ENCODE measurements at regions of chr16 and their contacts with region 1.

Region 1: GRCh38 chr16:23556881-23557778 is at the starts of genes EARS2 and UBFD1:
- DNase-seq: peak; percentile 96
- ATAC-seq: peak; percentile 91
- H3K4me3 ChIP-seq: peak within 1 kb of the TSS; percentile 96
- H3K27ac ChIP-seq: peak within 1 kb of the TSS; percentile 95
- H3K4me1 ChIP-seq: peaks cover 5% of the 10 kb centered on the region; the same call in 1 of the 2 replicates
- H3K27me3 ChIP-seq: no peaks in the 10 kb centered on the region
- CTCF ChIP-seq: peak; percentile 74
- total RNA-seq, gene EARS2: 23.7 and 31.6 TPM in 2 replicates
- total RNA-seq, gene UBFD1: 69.7 and 85.3 TPM in 2 replicates

Region 2: DNA sequence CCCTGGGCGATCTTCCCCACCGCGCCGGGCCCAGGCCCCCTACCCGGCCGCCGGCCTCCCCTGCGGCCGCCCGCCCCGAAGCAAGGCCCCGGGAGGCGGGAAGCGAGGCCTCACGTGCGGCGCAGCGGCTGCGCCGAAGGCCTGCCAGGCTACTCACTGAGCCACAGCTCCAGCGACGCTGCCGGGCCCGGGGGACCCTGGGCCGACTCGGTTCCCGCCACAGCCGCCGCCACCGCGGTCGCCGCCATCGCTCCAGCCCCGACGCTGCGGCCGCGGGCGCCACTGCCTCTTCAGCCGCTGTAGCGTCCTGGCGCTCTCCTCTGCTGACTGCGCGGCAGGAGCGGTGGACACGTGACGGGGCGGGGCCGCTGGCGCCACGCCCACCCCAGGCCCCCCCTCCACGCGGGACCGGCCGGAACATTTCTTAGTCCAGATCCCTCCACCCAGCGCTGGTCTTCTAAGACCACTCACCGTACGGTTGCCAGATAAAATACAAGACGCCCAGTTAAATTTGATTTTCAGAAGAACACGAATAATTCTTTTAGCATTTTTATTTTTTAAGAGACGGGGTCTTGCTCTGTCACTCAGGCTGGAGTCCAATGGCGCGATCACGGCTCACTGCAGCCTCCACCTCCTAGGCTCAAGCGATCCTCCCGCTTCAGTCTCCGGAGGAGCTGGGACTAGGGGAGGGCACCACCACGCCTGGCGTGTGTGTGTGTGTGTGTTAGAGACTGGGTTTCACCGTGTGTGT is 46.8 kb before region 1 on chr16 and contains the start of gene GGA2:
- CTCF ChIA-PET with region 1: interaction called, 3 read pairs
- POLR2A ChIA-PET with region 1: no interaction called
- intact Hi-C with region 1: loop called (anchors 1 kb)
- DNase-seq: peak; percentile 70
- ATAC-seq: peak; percentile 80
- H3K4me3 ChIP-seq: peak within 1 kb of the TSS; percentile 80
- H3K27ac ChIP-seq: no peak within 1 kb of the TSS
- H3K4me1 ChIP-seq: peaks cover 7% of the 10 kb centered on the region; the same call in 1 of the 2 replicates
- H3K27me3 ChIP-seq: no peaks in the 10 kb centered on the region
- CTCF ChIP-seq: no peak
- total RNA-seq, gene GGA2: 26.5 and 29.0 TPM in 2 replicates

Region 3: DNA sequence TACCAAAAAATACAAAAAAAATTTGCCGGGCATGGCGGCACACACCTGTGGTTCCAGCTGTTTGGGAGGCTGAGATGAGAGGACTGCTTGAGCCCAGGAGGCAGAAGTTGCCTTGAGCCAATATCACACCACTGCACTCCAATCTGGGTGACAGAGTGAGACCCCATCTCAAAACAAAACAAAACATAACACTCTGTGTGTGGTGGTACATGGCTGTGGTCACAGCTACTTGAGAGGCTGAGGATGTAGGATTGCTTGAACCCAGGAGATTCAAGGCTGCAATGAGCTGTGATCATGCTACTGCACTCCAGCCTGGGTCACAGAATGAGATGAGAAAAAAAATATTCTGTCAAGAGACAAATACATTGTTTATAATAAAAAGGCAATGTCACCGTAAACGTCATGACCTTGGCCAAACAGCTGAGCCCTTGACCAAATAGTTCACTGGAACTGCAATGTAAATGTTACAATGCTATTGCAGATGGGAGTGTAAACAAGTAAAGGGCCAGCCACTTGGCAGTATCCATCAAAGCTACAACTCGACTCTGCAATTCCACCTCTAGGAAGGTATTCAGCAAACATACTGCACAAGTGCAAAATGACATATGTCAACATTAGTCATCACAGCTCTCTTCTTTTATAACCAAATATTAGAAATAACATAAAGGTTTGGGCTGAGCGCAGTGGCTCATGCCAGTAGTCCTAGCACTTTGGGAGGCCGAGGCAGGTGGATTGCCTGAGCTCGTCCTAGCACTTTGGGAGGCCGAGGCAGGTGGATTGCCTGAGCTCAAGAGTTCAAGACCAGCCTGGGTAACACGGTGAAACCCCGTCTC is 16.9 kb before region 1 on chr16:
- CTCF ChIA-PET with region 1: interaction called, 4 read pairs
- POLR2A ChIA-PET with region 1: interaction called, 6 read pairs
- intact Hi-C with region 1: loop called (anchors 2 kb)
- DNase-seq: peak; percentile 81
- ATAC-seq: peak; percentile 96
- H3K4me3 ChIP-seq: no peak overlapping the region
- H3K27ac ChIP-seq: peak overlapping the region; percentile 53
- H3K4me1 ChIP-seq: peaks cover 24% of the 10 kb centered on the region
- H3K27me3 ChIP-seq: no peaks in the 10 kb centered on the region
- CTCF ChIP-seq: no peak

Region 4: DNA sequence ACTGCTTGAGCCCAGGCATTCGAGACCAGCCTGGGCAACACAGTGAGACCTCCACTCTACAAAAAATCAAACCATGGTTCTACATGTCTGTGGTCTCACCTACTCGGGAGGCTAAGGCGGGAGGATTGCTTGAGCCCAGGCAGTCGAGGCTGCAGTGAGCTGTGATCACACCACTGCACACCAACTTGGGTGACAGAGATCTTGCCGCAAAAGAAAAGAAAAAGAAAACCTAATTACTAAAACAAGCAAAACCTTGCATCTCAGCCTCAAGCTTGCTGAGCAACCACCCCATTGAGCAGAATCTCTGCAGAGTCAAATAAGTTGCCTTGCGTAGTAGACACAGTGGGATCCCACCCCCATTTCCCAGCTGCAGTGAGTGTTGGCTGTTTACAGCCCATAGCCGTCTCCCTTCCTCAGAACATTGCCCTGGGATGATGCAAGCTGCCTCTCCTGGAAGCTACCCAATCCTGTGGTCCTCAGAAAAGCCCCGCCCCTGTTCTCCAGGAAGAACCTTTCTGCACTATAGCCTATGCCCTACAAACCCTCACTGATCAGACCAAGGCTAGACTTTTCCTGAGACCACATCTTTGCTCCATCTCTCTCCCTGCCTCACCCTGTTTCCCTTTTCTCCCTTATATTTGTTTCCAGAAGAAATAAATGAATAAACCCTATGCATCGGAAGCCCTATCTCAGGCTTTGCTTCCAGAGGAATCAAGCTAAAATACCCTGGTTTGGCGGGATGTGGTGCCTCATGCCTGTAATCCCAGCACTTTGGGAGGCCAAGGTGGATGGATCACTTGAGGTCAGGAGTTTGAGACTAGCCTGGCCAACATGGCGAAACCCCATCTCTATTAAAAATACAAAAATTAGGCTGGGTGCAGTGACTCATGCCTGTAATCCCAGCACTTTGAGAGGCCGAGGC is 172.6 kb after region 1 on chr16:
- CTCF ChIA-PET with region 1: no interaction called
- POLR2A ChIA-PET with region 1: no interaction called
- intact Hi-C with region 1: loop called (anchors 2 kb)
- DNase-seq: peak; percentile 35
- ATAC-seq: no peak
- H3K4me3 ChIP-seq: no peak overlapping the region
- H3K27ac ChIP-seq: no peak overlapping the region
- H3K4me1 ChIP-seq: no peaks in the 10 kb centered on the region
- H3K27me3 ChIP-seq: no peaks in the 10 kb centered on the region
- CTCF ChIP-seq: no peak